Activated CD4-positive, alpha-beta T cell treated with anti-CD3 and anti-CD28 coated beads, Interleukin-2, amount 10 ng/mL, durations not matched to agents 24 days and 14 days (primary cell): ENCODE measurements at regions of chr2 and their contacts with region 1.

Region 1: DNA sequence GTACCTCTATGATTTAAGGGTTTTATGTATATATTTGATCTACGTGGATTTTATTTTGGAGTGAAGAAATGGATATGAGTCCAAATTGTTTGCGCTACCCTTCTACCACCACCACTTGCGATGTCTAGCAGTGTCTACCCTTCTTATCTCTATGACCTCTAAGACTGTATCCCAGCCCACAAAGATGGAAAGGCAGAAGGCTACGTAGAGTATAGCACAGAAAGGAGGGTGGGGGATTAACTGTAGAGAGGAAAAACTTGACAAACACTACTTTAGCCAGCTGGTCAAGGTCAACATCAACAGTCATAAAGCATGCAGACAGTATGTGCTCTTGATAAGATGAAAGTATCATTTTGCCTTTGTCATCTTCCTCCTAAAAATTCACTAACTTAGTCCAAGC is 14.4 kb downstream of the ITSN2 start:
- DNase-seq: no peak
- H3K4me3 Mint-ChIP-seq: no peak overlapping the region
- H3K27ac Mint-ChIP-seq: no peak overlapping the region
- H3K4me1 Mint-ChIP-seq: peaks cover 23% of the 10 kb centered on the region
- H3K27me3 Mint-ChIP-seq: no peaks in the 10 kb centered on the region

Region 2: GRCh38 chr2:24329700-24330099 is 16.2 kb before region 1 on chr2:
- intact Hi-C with region 1: no loop called
- DNase-seq: no peak
- H3K4me3 Mint-ChIP-seq: no peak overlapping the region
- H3K27ac Mint-ChIP-seq: no peak overlapping the region
- H3K4me1 Mint-ChIP-seq: peaks cover 7% of the 10 kb centered on the region
- H3K27me3 Mint-ChIP-seq: no peaks in the 10 kb centered on the region

Region 3: GRCh38 chr2:24360050-24360962 is 14.4 kb after region 1 on chr2 and contains the start of gene ITSN2:
- intact Hi-C with region 1: loop called (anchors 2 kb)
- DNase-seq: peak; percentile 95
- H3K4me3 Mint-ChIP-seq: peak within 1 kb of the TSS; percentile 88
- H3K27ac Mint-ChIP-seq: peak within 1 kb of the TSS; percentile 90
- H3K4me1 Mint-ChIP-seq: peaks cover 23% of the 10 kb centered on the region
- H3K27me3 Mint-ChIP-seq: no peaks in the 10 kb centered on the region
- total RNA-seq, gene ITSN2: 53.0 and 55.7 TPM in 2 replicates